Mammary epithelial cell (primary cell): ENCODE measurements at regions of chr3 and their contacts with region 1.

Region 1: DNA sequence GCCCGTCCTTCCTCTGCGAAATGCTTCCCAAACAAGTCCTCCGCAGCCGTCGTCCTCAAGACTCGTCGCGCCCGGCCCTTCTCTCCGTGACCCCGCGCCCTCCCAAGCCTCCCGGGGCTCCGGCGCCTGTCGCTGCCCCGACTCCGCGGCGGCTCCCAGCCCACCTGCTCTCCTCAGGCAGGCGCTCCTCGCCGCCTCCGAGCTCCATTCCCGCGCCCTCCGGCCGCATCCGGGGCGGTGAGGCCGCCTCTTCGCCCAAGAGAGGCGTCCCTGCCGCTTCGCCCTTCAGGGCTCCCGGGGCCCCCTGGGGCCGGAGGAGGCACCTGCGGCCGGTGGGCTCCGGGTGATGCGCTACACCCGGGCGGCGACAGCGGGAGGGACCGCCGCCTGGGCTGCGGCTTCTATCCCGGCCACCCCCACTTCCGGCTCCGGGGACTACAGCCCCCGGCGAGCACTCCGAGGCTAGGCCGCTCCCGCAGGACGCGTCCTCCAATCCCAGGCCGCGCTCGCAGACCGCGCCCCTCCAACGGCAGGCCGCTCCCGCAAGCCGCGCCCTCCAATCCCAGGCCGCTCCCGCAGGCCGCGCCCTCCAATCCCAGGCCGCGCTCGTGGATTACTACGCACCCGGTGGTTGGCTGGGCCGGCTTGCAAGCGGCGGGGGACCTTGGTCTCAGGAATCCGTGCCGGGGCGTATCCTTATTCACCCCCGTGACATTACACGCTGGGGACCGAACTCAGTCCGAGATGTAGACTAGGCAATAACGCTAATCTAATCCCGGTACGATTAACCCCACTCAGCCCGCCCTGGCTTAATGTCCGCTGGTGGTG is at the start of gene RUBCN:
- DNase-seq: peak; percentile 96
- H3K4me3 ChIP-seq: peak within 1 kb of the TSS; percentile 53 to 83 (median 81)
- H3K27ac ChIP-seq: peak within 1 kb of the TSS; percentile 65
- H3K4me1 ChIP-seq: peaks cover 15% of the 10 kb centered on the region
- H3K27me3 ChIP-seq: no peaks in the 10 kb centered on the region
- CTCF ChIP-seq: no peak
- total RNA-seq, gene RUBCN: 21.0 to 32.6 TPM

Region 2: DNA sequence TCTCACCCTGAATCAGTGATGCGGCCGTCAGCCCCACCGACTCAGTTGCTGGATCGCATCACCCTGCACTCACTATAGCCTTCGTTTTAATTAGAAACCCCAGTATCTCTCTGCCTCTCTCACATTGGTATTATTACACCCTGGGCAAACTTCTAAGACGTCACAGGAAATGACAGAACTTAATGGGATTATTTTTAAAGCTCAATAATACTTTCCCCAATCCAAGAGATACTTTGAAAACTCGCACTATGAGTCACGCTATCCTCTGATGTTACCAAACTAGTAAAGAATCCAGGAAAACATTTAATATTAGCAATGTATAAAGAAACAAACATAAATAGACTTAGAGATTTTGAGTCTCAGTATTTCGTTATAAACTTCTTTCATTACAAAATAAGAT is 36.6 kb before region 1 on chr3:
- CTCF ChIA-PET with region 1: no interaction called
- dilution Hi-C with region 1: no loop called
- in situ Hi-C with region 1: no loop called
- intact Hi-C with region 1: loop called (anchors 5 kb)
- DNase-seq: no peak
- H3K4me3 ChIP-seq: no peak overlapping the region
- H3K27ac ChIP-seq: no peak overlapping the region
- H3K4me1 ChIP-seq: no peaks in the 10 kb centered on the region
- H3K27me3 ChIP-seq: no peaks in the 10 kb centered on the region
- CTCF ChIP-seq: no peak